GM12878 (cell line): ENCODE measurements at regions of chr4 and their contacts with region 1.

Region 1: DNA sequence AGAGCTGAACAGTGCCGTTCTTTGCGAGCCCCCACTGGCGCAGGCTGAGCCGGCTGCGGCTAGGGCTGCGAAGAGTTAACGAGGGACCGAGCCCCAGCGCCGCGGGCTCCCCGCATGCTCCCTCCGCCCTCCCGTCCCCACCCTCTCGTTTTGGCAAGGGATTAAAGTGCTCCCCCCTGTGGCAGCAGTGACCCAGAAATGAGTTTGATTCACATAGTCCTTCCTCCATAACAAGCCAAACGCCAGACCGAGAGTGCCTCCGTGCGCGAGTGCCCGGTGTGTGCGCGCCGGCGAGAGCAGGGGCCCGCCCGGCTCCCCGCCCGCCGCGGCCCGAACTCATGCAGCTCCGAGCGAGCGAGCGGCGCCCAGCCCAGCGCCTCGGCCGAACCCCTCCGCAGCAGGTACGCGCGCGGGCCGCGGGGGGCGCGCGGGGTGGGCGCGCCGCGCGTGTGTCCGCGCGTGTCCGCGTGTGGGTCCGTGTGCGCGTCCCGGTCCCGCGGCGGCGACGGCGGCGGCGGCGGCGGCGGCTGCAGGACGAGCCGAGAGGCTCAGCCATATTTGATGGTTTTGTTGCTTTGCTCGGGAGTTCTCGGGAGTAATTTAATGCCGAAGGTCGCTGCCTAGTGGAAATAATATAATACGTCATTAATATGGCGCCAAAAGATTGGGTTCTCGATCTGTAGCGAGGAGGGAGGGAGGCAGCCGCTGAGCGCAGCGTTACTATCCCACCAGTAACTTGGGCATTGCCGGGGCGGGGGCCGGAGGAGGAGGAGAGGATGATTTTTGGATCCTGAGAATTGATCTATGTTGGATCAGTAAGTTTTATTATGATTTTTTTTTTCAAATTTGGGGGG is at the start of gene JADE1:
- DNase-seq: no peak
- ATAC-seq: peak; percentile 69
- H3K4me3 ChIP-seq: peak within 1 kb of the TSS; percentile 99
- H3K27ac ChIP-seq: peak within 1 kb of the TSS; percentile 97
- H3K4me1 ChIP-seq: no peaks in the 10 kb centered on the region
- H3K27me3 ChIP-seq: no peaks in the 10 kb centered on the region
- CTCF ChIP-seq: peak; percentile 74 to 95 (median 76)
- EP300 ChIP-seq: no peak
- POLR2A ChIP-seq: peak; percentile 83
- RAD21 ChIP-seq: peak; percentile 80
- polyA plus RNA-seq, gene JADE1: 5.9 to 6.3 TPM

Region 2: GRCh38 chr4:128191115-128191781 is 618.5 kb before region 1 on chr4:
- CTCF ChIA-PET with region 1: interaction called, 6 read pairs
- POLR2A ChIA-PET with region 1: no interaction called
- RAD21 ChIA-PET with region 1: interaction called, 5 read pairs
- SMC1A ChIA-PET with region 1: no interaction called
- in situ Hi-C with region 1: no loop called
- intact Hi-C with region 1: loop called (anchors 1 kb)
- DNase-seq: peak; percentile 54
- ATAC-seq: peak; percentile 100
- H3K4me3 ChIP-seq: no peak overlapping the region
- H3K27ac ChIP-seq: no peak overlapping the region
- H3K4me1 ChIP-seq: peaks cover 2% of the 10 kb centered on the region; the same call in 1 of the 2 replicates
- H3K27me3 ChIP-seq: no peaks in the 10 kb centered on the region
- CTCF ChIP-seq: peak; percentile 79 to 97 (median 91); a peak in 5 of 6 replicates
- EP300 ChIP-seq: no peak
- POLR2A ChIP-seq: no peak
- RAD21 ChIP-seq: peak; percentile 94

Region 3: GRCh38 chr4:128565565-128566186 is 244.0 kb before region 1 on chr4:
- CTCF ChIA-PET with region 1: interaction called, 3 read pairs
- POLR2A ChIA-PET with region 1: interaction called, 4 read pairs
- RAD21 ChIA-PET with region 1: no interaction called
- SMC1A ChIA-PET with region 1: no interaction called
- in situ Hi-C with region 1: no loop called
- intact Hi-C with region 1: loop called (anchors 2 kb)
- DNase-seq: no peak
- ATAC-seq: peak; percentile 92
- H3K4me3 ChIP-seq: no peak overlapping the region
- H3K27ac ChIP-seq: no peak overlapping the region
- H3K4me1 ChIP-seq: no peaks in the 10 kb centered on the region
- H3K27me3 ChIP-seq: no peaks in the 10 kb centered on the region; a peak in 1 of 4 replicates
- CTCF ChIP-seq: peak; percentile 49 to 71 (median 55)
- EP300 ChIP-seq: no peak
- POLR2A ChIP-seq: no peak
- RAD21 ChIP-seq: peak; percentile 69

Region 4: GRCh38 chr4:128665514-128665913 is 144.2 kb before region 1 on chr4:
- CTCF ChIA-PET with region 1: no interaction called
- POLR2A ChIA-PET with region 1: no interaction called
- RAD21 ChIA-PET with region 1: no interaction called
- SMC1A ChIA-PET with region 1: no interaction called
- in situ Hi-C with region 1: no loop called
- intact Hi-C with region 1: no loop called
- DNase-seq: no peak
- ATAC-seq: no peak
- H3K4me3 ChIP-seq: no peak overlapping the region
- H3K27ac ChIP-seq: no peak overlapping the region
- H3K4me1 ChIP-seq: no peaks in the 10 kb centered on the region
- H3K27me3 ChIP-seq: no peaks in the 10 kb centered on the region
- CTCF ChIP-seq: no peak
- EP300 ChIP-seq: no peak
- POLR2A ChIP-seq: no peak
- RAD21 ChIP-seq: no peak

Region 5: DNA sequence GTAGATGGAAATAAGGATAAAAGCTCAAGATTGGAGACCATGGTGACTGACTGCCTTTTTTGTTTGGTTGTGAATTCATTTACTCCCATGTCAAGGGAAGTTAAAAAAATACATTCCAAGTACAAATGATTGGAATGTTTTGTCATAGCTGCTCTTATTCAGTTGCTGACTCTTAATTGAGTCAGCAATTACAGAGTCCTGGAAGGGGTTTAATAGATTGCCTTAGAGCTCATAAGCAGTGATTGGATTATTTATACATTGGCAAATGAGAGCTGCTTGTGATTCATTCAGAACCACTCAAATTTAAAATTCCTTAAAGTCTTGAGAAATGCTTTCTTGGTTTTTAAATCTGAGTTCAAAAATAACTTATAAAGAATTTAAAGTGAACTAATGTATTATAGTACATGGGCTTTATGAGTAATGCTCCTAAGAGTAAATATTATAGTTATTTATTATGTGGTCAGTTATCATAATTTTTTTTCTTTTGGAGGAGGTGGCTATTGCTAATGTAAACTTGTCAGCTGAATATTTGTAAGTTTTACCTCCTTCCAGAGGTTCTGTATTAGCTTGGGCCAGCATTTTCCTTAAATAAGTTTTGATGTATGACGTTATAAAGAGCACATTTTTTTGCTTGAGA is 13.4 kb after region 1 on chr4:
- CTCF ChIA-PET with region 1: interaction called, 66 read pairs
- POLR2A ChIA-PET with region 1: interaction called, 70 read pairs
- RAD21 ChIA-PET with region 1: interaction called, 111 read pairs
- SMC1A ChIA-PET with region 1: interaction called, 76 read pairs
- in situ Hi-C with region 1: no loop called
- intact Hi-C with region 1: loop called (anchors 2 kb)
- DNase-seq: no peak
- ATAC-seq: no peak
- H3K4me3 ChIP-seq: no peak overlapping the region
- H3K27ac ChIP-seq: no peak overlapping the region
- H3K4me1 ChIP-seq: peaks cover 41% of the 10 kb centered on the region
- H3K27me3 ChIP-seq: no peaks in the 10 kb centered on the region
- CTCF ChIP-seq: no peak
- EP300 ChIP-seq: no peak
- POLR2A ChIP-seq: no peak
- RAD21 ChIP-seq: no peak

Region 6: GRCh38 chr4:128854433-128854832 is 44.7 kb after region 1 on chr4:
- CTCF ChIA-PET with region 1: interaction called, 4 read pairs
- POLR2A ChIA-PET with region 1: interaction called, 4 read pairs
- RAD21 ChIA-PET with region 1: interaction called, 12 read pairs
- SMC1A ChIA-PET with region 1: interaction called, 14 read pairs
- in situ Hi-C with region 1: no loop called
- intact Hi-C with region 1: no loop called
- DNase-seq: no peak
- ATAC-seq: no peak
- H3K4me3 ChIP-seq: no peak overlapping the region
- H3K27ac ChIP-seq: no peak overlapping the region
- H3K4me1 ChIP-seq: peaks cover 5% of the 10 kb centered on the region
- H3K27me3 ChIP-seq: no peaks in the 10 kb centered on the region
- CTCF ChIP-seq: no peak
- EP300 ChIP-seq: no peak
- POLR2A ChIP-seq: no peak
- RAD21 ChIP-seq: no peak

Region 7: DNA sequence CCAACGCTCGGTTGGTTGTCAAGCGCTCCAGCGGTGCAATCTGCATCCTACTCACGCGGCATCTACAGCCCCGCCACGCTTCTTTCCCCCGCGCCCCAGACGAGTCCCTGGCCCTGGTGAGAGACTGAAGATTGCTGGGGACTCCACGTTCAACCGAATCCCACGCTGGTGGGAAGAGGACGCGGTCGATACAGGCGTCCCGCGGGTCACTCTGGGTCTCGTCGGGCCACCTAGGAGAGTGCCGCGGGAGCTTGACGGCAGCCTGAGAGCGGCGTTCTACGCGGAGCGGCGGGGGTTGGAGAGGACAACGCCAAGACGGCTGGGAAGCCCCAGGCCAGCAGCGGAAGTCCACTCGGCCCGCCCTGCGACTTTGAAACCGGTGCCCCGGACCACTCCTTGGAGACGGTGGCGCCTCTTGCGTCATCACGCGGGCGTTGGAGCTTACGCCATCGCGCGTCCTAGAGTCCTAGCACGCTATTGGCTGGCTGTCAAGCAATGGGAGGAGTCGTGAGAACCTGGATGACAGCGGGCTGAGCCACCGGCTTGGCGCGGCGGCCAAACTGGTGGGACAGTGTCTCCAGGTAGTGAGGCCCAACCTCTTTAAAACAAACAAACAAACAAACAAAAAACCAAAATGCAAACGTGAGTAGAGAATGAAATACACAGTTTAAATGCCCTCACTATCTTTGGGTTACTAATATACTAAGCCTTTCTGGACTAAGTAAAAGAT is 283.7 kb after region 1 on chr4 and contains the start of gene SCLT1:
- CTCF ChIA-PET with region 1: interaction called, 3 read pairs
- POLR2A ChIA-PET with region 1: interaction called, 17 read pairs
- RAD21 ChIA-PET with region 1: interaction called, 18 read pairs
- SMC1A ChIA-PET with region 1: interaction called, 17 read pairs
- in situ Hi-C with region 1: loop called (anchors 10 kb)
- intact Hi-C with region 1: loop called (anchors 1 kb)
- DNase-seq: peak; percentile 91
- ATAC-seq: peak; percentile 91
- H3K4me3 ChIP-seq: peak within 1 kb of the TSS; percentile 80
- H3K27ac ChIP-seq: peak within 1 kb of the TSS; percentile 78
- H3K4me1 ChIP-seq: peaks cover 3% of the 10 kb centered on the region; the same call in 1 of the 2 replicates
- H3K27me3 ChIP-seq: no peaks in the 10 kb centered on the region
- CTCF ChIP-seq: no peak
- EP300 ChIP-seq: no peak
- POLR2A ChIP-seq: peak; percentile 98
- RAD21 ChIP-seq: no peak
- polyA plus RNA-seq, gene SCLT1: 7.8 to 8.7 TPM